H1 (cell line): ENCODE measurements at regions of chr9 and their contacts with region 1.

Region 1: GRCh38 chr9:1732670-1733069 is 282.5 kb upstream of the SMARCA2 start:
- DNase-seq: no peak
- H3K4me3 ChIP-seq: no peak overlapping the region
- H3K27ac ChIP-seq: no peak overlapping the region
- H3K4me1 ChIP-seq: no peaks in the 10 kb centered on the region
- H3K27me3 ChIP-seq: peaks cover 0 to 1% (median under 1%) of the 10 kb centered on the region in 4 experiments; a peak in 3 of 7 replicates
- CTCF ChIP-seq: peak in 2 of 3 experiments; percentile 31 to 44; a peak in 2 of 4 replicates
- EP300 ChIP-seq: no peak
- POLR2A ChIP-seq: no peak
- RAD21 ChIP-seq: peak; percentile 35 to 56

Region 2: GRCh38 chr9:1718836-1719235 is 13.8 kb before region 1 on chr9:
- CTCF ChIA-PET with region 1: interaction called, 10 read pairs
- POLR2A ChIA-PET with region 1: no interaction called
- DNase-seq: no peak
- H3K4me3 ChIP-seq: no peak overlapping the region
- H3K27ac ChIP-seq: no peak overlapping the region
- H3K4me1 ChIP-seq: peaks cover 0 to 5% (median 2%) of the 10 kb centered on the region in 4 experiments; a peak in 3 of 7 replicates
- H3K27me3 ChIP-seq: no peaks in the 10 kb centered on the region
- CTCF ChIP-seq: no peak
- EP300 ChIP-seq: no peak
- POLR2A ChIP-seq: no peak
- RAD21 ChIP-seq: peak in 1 of 2 experiments; percentile 20; a peak in 1 of 4 replicates

Region 3: GRCh38 chr9:1743121-1743960 is 10.7 kb after region 1 on chr9:
- CTCF ChIA-PET with region 1: interaction called, 22 read pairs
- POLR2A ChIA-PET with region 1: no interaction called
- DNase-seq: no peak
- H3K4me3 ChIP-seq: no peak overlapping the region
- H3K27ac ChIP-seq: no peak overlapping the region
- H3K4me1 ChIP-seq: no peaks in the 10 kb centered on the region
- H3K27me3 ChIP-seq: no peaks in the 10 kb centered on the region
- CTCF ChIP-seq: no peak
- EP300 ChIP-seq: no peak
- POLR2A ChIP-seq: no peak
- RAD21 ChIP-seq: no peak